Activated CD8-positive, alpha-beta T cell treated with anti-CD3 and anti-CD28 coated beads for 36 hours (primary cell): ENCODE measurements at regions of chr4 and their contacts with region 1.

Region 1: GRCh38 chr4:81405894-81406401 is 65.8 kb downstream of the RASGEF1B start:
- DNase-seq: peak; percentile 37
- ATAC-seq: peak; percentile 78
- H3K4me3 Mint-ChIP-seq: no peak overlapping the region
- H3K27ac Mint-ChIP-seq: no peak overlapping the region
- H3K4me1 Mint-ChIP-seq: peaks cover 3% of the 10 kb centered on the region
- H3K27me3 Mint-ChIP-seq: no peaks in the 10 kb centered on the region
- CTCF ChIP-seq: peak; percentile 98

Region 2: DNA sequence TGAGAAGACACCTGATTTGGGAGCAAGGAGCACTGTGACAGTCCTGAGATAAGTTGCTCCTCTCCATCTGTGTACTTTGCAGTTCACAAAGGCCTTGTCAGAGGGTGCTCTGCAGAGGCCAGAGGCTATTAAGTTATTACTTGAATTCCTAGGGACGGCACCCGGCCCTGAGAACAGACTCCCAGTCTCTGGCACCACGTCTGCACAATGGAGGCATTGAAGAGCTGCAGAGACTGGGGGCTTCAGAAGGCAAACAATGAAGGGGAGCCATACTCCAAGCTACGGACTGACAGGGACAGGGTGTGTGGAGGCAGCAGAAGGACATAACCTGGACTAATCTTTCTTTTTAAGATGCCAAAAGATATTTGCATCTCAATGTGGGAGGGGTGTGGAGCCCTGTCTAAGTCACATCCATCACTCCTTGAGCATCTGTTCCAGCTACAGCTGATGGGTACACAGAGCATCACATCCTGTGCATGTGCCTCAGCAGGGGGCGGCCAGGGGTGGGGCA is 54.3 kb after region 1 on chr4:
- CTCF ChIA-PET with region 1: interaction called, 3 read pairs
- POLR2A ChIA-PET with region 1: no interaction called
- intact Hi-C with region 1: loop called (anchors 5 kb)
- DNase-seq: peak; percentile 21
- ATAC-seq: peak; percentile 49
- H3K4me3 Mint-ChIP-seq: no peak overlapping the region
- H3K27ac Mint-ChIP-seq: no peak overlapping the region
- H3K4me1 Mint-ChIP-seq: peaks cover 42% of the 10 kb centered on the region
- H3K27me3 Mint-ChIP-seq: no peaks in the 10 kb centered on the region
- CTCF ChIP-seq: no peak

Region 3: GRCh38 chr4:81844717-81845116 is 438.8 kb after region 1 on chr4:
- CTCF ChIA-PET with region 1: interaction called, 9 read pairs
- POLR2A ChIA-PET with region 1: no interaction called
- intact Hi-C with region 1: loop called (anchors 5 kb)
- DNase-seq: peak; percentile 88
- ATAC-seq: peak; percentile 97
- H3K4me3 Mint-ChIP-seq: no peak overlapping the region
- H3K27ac Mint-ChIP-seq: no peak overlapping the region
- H3K4me1 Mint-ChIP-seq: peaks cover 8% of the 10 kb centered on the region
- H3K27me3 Mint-ChIP-seq: no peaks in the 10 kb centered on the region
- CTCF ChIP-seq: peak; percentile 61

Region 4: GRCh38 chr4:82201805-82202641 is 796.1 kb after region 1 on chr4:
- CTCF ChIA-PET with region 1: interaction called, 6 read pairs
- POLR2A ChIA-PET with region 1: no interaction called
- intact Hi-C with region 1: loop called (anchors 5 kb)
- DNase-seq: peak; percentile 82
- ATAC-seq: peak; percentile 55
- H3K4me3 Mint-ChIP-seq: no peak overlapping the region
- H3K27ac Mint-ChIP-seq: no peak overlapping the region
- H3K4me1 Mint-ChIP-seq: no peaks in the 10 kb centered on the region
- H3K27me3 Mint-ChIP-seq: peaks cover 2% of the 10 kb centered on the region
- CTCF ChIP-seq: peak; percentile 77

Region 5: GRCh38 chr4:82268050-82268825 is 862.3 kb after region 1 on chr4:
- CTCF ChIA-PET with region 1: interaction called, 5 read pairs
- POLR2A ChIA-PET with region 1: no interaction called
- intact Hi-C with region 1: loop called (anchors 1 kb)
- DNase-seq: peak; percentile 63
- ATAC-seq: peak; percentile 86
- H3K4me3 Mint-ChIP-seq: no peak overlapping the region
- H3K27ac Mint-ChIP-seq: no peak overlapping the region
- H3K4me1 Mint-ChIP-seq: peaks cover 10% of the 10 kb centered on the region
- H3K27me3 Mint-ChIP-seq: no peaks in the 10 kb centered on the region
- CTCF ChIP-seq: peak; percentile 79